PC-9 (cell line): ENCODE measurements at regions of chr6 and their contacts with region 1.

Region 1: DNA sequence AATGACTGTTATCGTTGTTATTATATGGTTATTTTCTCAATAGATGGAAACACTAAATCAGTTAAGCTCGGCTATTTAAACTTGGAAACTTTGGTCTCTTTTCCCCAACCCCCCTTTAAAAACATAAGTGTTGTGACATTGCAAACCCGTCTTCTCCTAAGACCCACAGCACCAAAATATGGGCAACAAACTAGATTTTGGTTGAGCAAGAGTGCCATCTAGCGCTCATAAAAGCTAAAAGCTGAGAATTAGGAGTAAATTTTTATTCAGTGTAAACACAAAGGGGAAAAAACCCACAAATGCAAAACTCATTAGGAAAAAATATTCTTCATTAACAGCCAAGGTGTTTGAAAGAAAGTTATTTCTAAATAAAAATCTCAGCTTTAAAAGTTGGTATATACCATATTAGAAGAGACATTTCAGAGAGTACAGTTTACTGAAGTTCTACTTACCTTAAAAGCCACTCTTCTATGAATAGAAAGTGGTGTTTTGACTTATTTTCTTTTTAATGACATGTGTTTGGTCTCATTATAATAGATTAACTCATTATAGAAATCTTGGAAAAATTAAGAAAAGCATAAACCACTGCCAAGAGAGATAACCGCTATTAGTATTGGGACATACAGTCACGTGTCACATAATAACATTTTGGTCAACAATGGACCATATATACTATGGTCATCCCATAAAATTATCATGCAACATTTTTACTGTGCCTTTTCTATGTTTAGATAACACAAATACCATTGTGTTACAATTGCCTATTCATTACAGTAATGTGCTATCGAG is 21.1 kb downstream of the SESN1 start:
- DNase-seq: peak; percentile 30 to 68
- H3K4me3 ChIP-seq: no peak overlapping the region
- H3K27ac ChIP-seq: no peak overlapping the region
- H3K4me1 ChIP-seq: no peaks in the 10 kb centered on the region; the same call in 1 of the 2 replicates
- H3K27me3 ChIP-seq: no peaks in the 10 kb centered on the region
- CTCF ChIP-seq: peak; percentile 87

Region 2: DNA sequence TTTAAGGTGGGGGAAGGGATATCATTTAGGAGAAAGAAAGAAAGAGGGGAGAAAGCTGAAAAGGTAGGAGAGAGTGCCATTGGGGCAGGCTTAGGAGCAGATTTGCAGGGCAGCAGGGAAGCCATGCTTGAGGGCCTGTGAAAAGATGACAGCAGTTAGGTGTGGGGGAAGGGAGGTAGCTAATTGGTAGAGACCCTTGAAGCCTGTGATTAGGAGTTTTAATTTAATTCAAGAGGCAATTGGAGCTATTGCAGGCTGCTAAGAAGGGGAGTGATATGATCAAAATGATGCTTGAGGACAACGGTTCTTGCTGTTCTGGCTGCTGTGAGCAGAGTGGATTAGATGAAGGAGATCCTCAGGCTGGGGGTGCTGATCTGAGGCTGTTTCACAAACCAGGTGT is 1091.1 kb before region 1 on chr6:
- CTCF ChIA-PET with region 1: no interaction called
- POLR2A ChIA-PET with region 1: no interaction called
- intact Hi-C with region 1: loop called (anchors 5 kb)
- DNase-seq: no peak
- H3K4me3 ChIP-seq: no peak overlapping the region
- H3K27ac ChIP-seq: no peak overlapping the region
- H3K4me1 ChIP-seq: no peaks in the 10 kb centered on the region
- H3K27me3 ChIP-seq: no peaks in the 10 kb centered on the region
- CTCF ChIP-seq: no peak

Region 3: DNA sequence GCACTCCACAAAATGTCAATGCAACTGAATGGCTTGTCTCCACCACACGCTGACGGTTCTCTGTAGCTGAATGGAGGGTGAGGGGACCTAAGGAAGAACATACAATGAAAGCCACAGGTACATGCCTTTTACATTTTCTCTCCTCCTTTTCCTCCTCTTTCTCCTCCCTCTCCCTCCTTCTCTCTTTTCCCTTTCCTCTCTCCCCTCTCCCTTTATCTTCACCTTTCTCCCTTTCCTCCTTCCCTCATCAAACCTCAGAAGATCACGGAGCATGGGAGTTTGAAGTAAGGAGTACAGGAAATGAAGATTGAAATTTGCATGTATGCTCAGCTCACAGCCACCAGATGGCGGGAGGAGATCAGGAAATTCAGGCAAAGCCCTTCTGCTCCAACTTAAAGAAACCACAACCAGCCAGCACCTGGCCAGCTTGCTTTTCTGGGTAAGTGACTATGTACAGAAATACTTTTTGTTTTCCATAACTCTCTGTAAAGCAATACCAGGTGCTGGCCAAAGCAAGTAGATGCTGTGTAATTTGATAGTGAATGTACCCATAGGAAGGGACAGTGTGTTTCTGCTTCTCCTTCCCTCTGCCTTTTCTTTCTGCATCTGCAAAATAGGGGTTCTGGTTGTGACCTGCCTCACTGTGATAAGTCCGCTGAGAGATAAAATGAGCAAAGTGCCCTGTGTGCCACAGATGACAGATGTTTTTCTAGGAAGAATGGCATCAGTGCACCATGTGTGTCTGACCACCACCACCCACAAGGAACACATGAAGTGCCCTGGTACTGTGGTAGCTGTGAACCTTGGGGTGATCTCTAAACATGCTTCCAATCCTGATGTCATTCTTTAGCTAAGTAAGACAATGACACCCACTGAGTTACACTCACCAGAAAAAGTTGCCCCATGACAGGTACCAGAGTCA is 531.4 kb before region 1 on chr6:
- CTCF ChIA-PET with region 1: interaction called, 9 read pairs
- POLR2A ChIA-PET with region 1: no interaction called
- intact Hi-C with region 1: loop called (anchors 1 kb)
- DNase-seq: peak; percentile 68 to 71
- H3K4me3 ChIP-seq: no peak overlapping the region
- H3K27ac ChIP-seq: no peak overlapping the region
- H3K4me1 ChIP-seq: peaks cover 3% of the 10 kb centered on the region; the same call in 1 of the 2 replicates
- H3K27me3 ChIP-seq: no peaks in the 10 kb centered on the region
- CTCF ChIP-seq: peak; percentile 98

Region 4: GRCh38 chr6:108835218-108835850 is 238.2 kb before region 1 on chr6:
- CTCF ChIA-PET with region 1: no interaction called
- POLR2A ChIA-PET with region 1: no interaction called
- intact Hi-C with region 1: loop called (anchors 1 kb)
- DNase-seq: peak; percentile 61 to 78
- H3K4me3 ChIP-seq: no peak overlapping the region
- H3K27ac ChIP-seq: no peak overlapping the region
- H3K4me1 ChIP-seq: no peaks in the 10 kb centered on the region
- H3K27me3 ChIP-seq: no peaks in the 10 kb centered on the region
- CTCF ChIP-seq: peak; percentile 95

Region 5: GRCh38 chr6:108947114-108947854 is 126.3 kb before region 1 on chr6:
- CTCF ChIA-PET with region 1: no interaction called
- POLR2A ChIA-PET with region 1: no interaction called
- intact Hi-C with region 1: loop called (anchors 5 kb)
- DNase-seq: peak; percentile 54 to 99
- H3K4me3 ChIP-seq: no peak overlapping the region
- H3K27ac ChIP-seq: peak overlapping the region; percentile 75
- H3K4me1 ChIP-seq: peaks cover 33% of the 10 kb centered on the region
- H3K27me3 ChIP-seq: no peaks in the 10 kb centered on the region
- CTCF ChIP-seq: no peak

Region 6: DNA sequence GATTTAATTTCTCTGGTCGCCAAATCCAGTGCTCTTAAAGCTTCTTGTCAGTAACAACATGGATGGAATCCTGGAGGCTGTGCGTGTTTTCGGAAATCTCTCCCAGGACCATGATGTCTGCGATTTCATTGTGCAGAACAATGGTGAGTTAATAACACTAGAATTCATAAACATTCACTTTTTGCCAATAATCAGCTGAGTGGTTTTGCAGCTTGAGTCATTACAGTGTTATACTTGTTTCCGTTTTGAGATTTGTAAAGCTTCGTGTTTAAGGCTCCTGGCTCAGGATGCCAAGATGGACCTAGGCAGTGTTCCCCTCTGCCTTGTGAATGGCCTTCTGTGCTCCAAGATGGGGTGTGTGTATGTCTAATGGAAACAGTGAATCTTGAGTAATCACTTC is 111.6 kb before region 1 on chr6:
- CTCF ChIA-PET with region 1: no interaction called
- POLR2A ChIA-PET with region 1: no interaction called
- intact Hi-C with region 1: no loop called
- DNase-seq: no peak
- H3K4me3 ChIP-seq: no peak overlapping the region
- H3K27ac ChIP-seq: no peak overlapping the region
- H3K4me1 ChIP-seq: peaks cover 12% of the 10 kb centered on the region
- H3K27me3 ChIP-seq: no peaks in the 10 kb centered on the region
- CTCF ChIP-seq: no peak

Region 7: GRCh38 chr6:108982154-108983113 is 91.1 kb before region 1 on chr6:
- CTCF ChIA-PET with region 1: no interaction called
- POLR2A ChIA-PET with region 1: no interaction called
- intact Hi-C with region 1: no loop called
- DNase-seq: no peak
- H3K4me3 ChIP-seq: no peak overlapping the region
- H3K27ac ChIP-seq: no peak overlapping the region
- H3K4me1 ChIP-seq: no peaks in the 10 kb centered on the region
- H3K27me3 ChIP-seq: no peaks in the 10 kb centered on the region
- CTCF ChIP-seq: no peak

Region 8: GRCh38 chr6:109036574-109037294 is 36.8 kb before region 1 on chr6:
- CTCF ChIA-PET with region 1: no interaction called
- POLR2A ChIA-PET with region 1: no interaction called
- intact Hi-C with region 1: no loop called
- DNase-seq: no peak
- H3K4me3 ChIP-seq: no peak overlapping the region
- H3K27ac ChIP-seq: no peak overlapping the region
- H3K4me1 ChIP-seq: peaks cover 4% of the 10 kb centered on the region; the same call in 1 of the 2 replicates
- H3K27me3 ChIP-seq: no peaks in the 10 kb centered on the region
- CTCF ChIP-seq: no peak

Region 9: DNA sequence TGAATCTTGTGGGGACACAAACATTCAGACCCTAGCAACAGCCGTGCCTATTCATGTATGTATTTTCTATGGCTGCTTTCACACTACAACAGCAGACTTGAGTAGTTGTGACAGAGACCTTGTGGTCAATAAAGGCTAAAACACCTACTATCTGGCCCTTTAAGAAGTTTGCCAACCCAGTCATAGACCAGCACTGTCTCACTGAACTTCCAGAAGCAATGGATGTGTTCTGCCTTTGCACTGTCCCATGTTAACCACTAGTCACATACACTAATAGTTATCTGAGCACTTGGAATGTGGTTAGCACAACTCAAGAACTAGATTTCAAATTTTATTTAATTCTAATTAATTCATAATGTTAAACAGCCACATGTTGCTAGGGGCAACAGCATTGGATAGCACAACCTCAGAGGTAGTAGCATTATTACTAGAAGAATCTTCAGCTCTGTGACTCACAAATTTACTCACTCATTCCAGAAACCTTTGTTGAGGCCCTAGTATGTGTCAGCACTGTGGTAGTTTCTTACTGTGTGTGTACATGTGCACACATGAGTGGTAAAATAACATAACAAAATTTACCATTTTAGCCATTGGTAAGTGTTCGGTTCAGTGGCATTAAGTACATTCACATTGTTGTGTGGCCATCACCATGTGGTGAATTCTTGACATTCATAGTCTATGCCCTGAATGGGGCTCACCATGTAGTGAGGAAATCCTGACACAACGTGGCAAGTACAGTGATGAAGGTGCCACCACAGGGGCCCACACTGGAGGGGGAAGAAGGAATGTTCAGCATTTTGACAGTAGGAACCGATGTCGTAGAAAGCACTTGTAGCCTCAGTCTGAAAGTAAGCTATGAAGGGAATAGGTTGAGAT is 129.1 kb after region 1 on chr6:
- CTCF ChIA-PET with region 1: no interaction called
- POLR2A ChIA-PET with region 1: no interaction called
- intact Hi-C with region 1: no loop called
- DNase-seq: no peak
- H3K4me3 ChIP-seq: no peak overlapping the region
- H3K27ac ChIP-seq: no peak overlapping the region
- H3K4me1 ChIP-seq: no peaks in the 10 kb centered on the region
- H3K27me3 ChIP-seq: no peaks in the 10 kb centered on the region
- CTCF ChIP-seq: no peak